ENCODE measurements at regions of chr10 and their contacts with region 1.

Region 1: DNA sequence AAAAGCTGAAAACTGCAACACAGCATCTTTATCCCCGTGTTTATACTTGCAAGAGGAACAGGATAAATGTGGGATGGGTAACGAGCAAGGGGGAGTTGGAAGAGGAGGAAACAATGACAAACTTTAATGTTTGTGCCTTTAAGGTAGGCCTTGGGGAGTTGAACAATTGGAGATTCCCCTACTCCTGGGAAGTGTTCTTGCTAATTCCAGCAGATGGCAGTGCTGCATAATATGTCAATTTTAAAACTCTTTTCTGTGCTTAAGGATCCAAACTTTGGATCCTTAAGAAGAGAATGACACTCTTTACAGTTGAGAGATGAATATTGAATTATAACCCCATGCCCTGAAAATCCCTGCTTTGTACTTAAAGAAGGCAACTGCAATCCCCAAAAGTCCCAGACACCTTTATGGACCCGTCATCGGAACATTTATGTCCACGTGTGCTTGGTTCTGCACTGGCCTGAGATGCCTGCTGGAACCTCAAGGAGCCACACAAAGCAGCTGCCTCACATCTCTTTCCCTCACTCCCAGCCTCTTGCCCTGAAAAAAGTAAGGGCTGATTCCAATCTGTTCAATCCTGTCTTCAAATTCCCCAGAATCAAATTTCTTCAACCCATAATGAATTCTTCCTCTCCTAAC is 12.0 kb downstream of the IFIT5 start:
- DNase-seq: peak; percentile 6
- H3K4me3 Mint-ChIP-seq: no peak overlapping the region
- H3K27ac Mint-ChIP-seq: no peak overlapping the region
- H3K4me1 Mint-ChIP-seq: peaks cover 41% of the 10 kb centered on the region
- H3K27me3 Mint-ChIP-seq: no peaks in the 10 kb centered on the region
- CTCF ChIP-seq: peak; percentile 56

Region 2: DNA sequence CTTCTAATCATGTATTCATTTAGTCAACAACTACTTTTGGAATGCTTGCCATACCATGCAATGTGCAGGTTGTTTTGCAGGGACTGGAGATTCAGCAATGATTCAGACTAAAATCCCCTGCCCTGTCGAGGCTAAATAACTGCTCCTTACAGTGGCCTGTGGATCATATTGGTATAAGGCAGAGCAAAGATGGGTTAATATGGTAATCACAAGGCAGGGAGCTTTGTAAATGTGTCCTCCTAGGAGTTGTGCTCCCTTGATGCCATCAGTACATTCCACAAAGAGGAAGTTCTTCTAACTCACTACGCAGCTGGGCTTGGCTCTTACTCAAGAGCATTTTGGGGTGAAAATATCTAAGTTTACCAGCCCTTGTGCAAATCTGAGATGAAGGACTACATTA is 125.1 kb before region 1 on chr10:
- CTCF ChIA-PET with region 1: no interaction called
- intact Hi-C with region 1: no loop called
- DNase-seq: no peak
- H3K4me3 Mint-ChIP-seq: peak overlapping the region; percentile 63
- H3K27ac Mint-ChIP-seq: peak overlapping the region; percentile 22
- H3K4me1 Mint-ChIP-seq: peaks cover 33% of the 10 kb centered on the region
- H3K27me3 Mint-ChIP-seq: no peaks in the 10 kb centered on the region
- CTCF ChIP-seq: no peak

Region 3: DNA sequence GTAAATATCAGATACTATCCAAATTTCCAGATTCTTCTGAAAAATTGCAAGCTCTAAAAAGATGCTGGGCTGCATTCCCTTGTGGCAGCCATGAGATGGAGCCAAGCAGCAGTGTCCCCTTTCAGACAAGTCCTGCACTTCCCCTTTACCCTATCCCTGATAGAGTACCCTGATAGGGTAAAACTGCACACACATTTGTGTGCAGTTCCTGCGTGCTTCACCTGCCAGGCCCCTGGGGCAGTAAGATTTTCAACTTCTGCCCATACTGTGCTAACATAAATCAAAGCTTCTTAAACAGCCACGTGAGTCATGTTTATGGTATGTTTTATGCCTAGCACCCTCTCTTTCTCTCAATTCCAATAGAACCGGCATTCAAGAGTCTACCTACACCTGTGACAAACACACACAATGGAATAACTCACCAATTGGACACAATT is 40.3 kb after region 1 on chr10:
- CTCF ChIA-PET with region 1: no interaction called
- intact Hi-C with region 1: loop called (anchors 2 kb)
- DNase-seq: peak; percentile 51
- H3K4me3 Mint-ChIP-seq: no peak overlapping the region
- H3K27ac Mint-ChIP-seq: peak overlapping the region; percentile 54
- H3K4me1 Mint-ChIP-seq: peaks cover 48% of the 10 kb centered on the region
- H3K27me3 Mint-ChIP-seq: no peaks in the 10 kb centered on the region
- CTCF ChIP-seq: no peak

Region 4: GRCh38 chr10:89553064-89553734 is 126.8 kb after region 1 on chr10:
- CTCF ChIA-PET with region 1: interaction called, 4 read pairs
- intact Hi-C with region 1: loop called (anchors 2 kb)
- DNase-seq: peak; percentile 44
- H3K4me3 Mint-ChIP-seq: no peak overlapping the region
- H3K27ac Mint-ChIP-seq: peak overlapping the region; percentile 61
- H3K4me1 Mint-ChIP-seq: peaks cover 59% of the 10 kb centered on the region
- H3K27me3 Mint-ChIP-seq: no peaks in the 10 kb centered on the region
- CTCF ChIP-seq: no peak

Region 5: DNA sequence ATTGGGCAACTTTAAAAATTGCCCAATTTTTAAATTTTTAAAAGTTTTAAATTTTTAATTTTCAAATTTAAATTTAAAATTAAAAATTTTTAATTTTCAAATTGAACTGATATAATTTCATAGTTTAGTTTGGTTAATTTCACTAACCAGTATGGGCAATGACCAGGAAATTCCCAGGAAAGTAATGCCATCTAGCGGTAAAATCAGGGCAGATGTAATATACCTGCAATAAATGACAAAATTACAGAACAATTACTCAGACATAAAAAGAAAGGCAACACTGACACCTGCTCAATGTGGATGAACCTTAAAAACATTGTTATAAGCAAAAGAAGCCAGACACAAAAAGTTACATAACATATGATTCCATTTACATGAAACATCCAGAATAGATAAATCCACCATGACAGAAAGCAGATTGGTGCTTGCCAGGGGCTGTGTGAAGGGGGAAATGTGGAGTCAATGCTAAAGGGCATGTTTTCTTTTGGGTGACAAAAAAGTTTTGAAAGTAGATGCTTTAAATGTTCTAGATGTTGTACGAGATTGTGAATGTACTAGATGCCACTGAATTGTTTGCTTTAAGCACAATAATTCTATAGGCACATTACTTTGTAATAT is 137.6 kb after region 1 on chr10:
- CTCF ChIA-PET with region 1: no interaction called
- intact Hi-C with region 1: loop called (anchors 1 kb)
- DNase-seq: peak; percentile 26
- H3K4me3 Mint-ChIP-seq: no peak overlapping the region
- H3K27ac Mint-ChIP-seq: no peak overlapping the region
- H3K4me1 Mint-ChIP-seq: no peaks in the 10 kb centered on the region
- H3K27me3 Mint-ChIP-seq: no peaks in the 10 kb centered on the region
- CTCF ChIP-seq: peak; percentile 18

Region 6: GRCh38 chr10:89643431-89644331 is 217.3 kb after region 1 on chr10:
- CTCF ChIA-PET with region 1: no interaction called
- intact Hi-C with region 1: loop called (anchors 5 kb)
- DNase-seq: peak; percentile 73
- H3K4me3 Mint-ChIP-seq: no peak overlapping the region
- H3K27ac Mint-ChIP-seq: no peak overlapping the region
- H3K4me1 Mint-ChIP-seq: peaks cover 19% of the 10 kb centered on the region
- H3K27me3 Mint-ChIP-seq: no peaks in the 10 kb centered on the region
- CTCF ChIP-seq: no peak